ENCODE measurements at regions of chr19 and their contacts with region 1.

Region 1: DNA sequence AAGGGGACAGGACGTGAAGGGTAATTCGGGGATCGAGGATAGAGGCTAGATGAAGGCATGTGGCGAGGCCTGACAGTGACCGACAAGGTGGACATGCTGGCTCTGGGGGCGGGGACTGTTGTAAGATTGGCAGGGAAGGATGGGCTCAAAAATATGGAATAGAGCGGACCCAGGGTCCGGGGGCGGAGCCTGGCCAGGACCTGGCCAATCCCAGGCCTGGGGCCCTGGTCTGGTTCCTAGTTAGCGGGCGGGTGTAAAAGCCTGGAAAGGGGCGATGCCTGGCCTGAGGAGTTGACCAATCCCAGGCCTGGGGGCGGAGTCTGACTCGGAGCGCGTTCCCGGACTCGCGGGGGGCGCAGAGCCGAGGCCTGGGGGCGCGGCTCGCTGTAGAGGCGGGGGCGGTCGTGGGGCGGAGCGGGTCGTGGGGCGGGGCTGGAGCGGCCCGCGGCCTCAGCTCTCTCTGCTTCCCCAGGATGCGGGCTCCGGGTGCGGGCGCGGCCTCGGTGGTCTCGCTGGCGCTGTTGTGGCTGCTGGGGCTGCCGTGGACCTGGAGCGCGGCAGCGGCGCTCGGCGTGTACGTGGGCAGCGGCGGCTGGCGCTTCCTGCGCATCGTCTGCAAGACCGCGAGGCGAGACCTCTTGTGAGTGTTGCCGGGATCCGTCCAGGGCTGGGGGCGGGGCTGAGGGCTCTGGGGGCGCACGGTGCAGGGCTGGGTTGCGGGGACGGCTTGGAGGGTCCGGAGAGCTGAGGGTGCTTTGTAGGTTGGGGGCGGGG is at the start of gene SLC27A1:
- DNase-seq: peak; percentile 98 to 100
- H3K4me3 ChIP-seq: peak within 1 kb of the TSS; percentile 87 to 89
- H3K27ac ChIP-seq: peak within 1 kb of the TSS; percentile 80 to 91
- H3K4me1 ChIP-seq: peaks cover 13 to 18% of the 10 kb centered on the region in 2 donors
- H3K27me3 ChIP-seq: no peaks in the 10 kb centered on the region
- CTCF ChIP-seq: no peak
- total RNA-seq, gene SLC27A1: 64.9 TPM

Region 2: GRCh38 chr19:17266975-17267788 is 203.1 kb before region 1 on chr19 and contains the start of gene BABAM1:
- intact Hi-C with region 1: loop called (anchors 10 kb)
- DNase-seq: peak; percentile 92 to 99
- H3K4me3 ChIP-seq: peak within 1 kb of the TSS; percentile 79 to 96
- H3K27ac ChIP-seq: peak within 1 kb of the TSS; percentile 61 to 83
- H3K4me1 ChIP-seq: peaks cover 5 to 6% of the 10 kb centered on the region in 2 donors
- H3K27me3 ChIP-seq: no peaks in the 10 kb centered on the region
- CTCF ChIP-seq: no peak
- total RNA-seq, gene BABAM1: 85.5 TPM

Region 3: GRCh38 chr19:17336872-17337722 is 133.2 kb before region 1 on chr19 and contains the start of gene GTPBP3:
- intact Hi-C with region 1: loop called (anchors 2 kb)
- DNase-seq: peak; percentile 97 to 99
- H3K4me3 ChIP-seq: peak within 1 kb of the TSS; percentile 84 to 91
- H3K27ac ChIP-seq: peak within 1 kb of the TSS; percentile 91 to 95
- H3K4me1 ChIP-seq: peaks cover 15 to 23% of the 10 kb centered on the region in 2 donors
- H3K27me3 ChIP-seq: no peaks in the 10 kb centered on the region
- CTCF ChIP-seq: no peak
- total RNA-seq, gene GTPBP3: 256 TPM

Region 4: DNA sequence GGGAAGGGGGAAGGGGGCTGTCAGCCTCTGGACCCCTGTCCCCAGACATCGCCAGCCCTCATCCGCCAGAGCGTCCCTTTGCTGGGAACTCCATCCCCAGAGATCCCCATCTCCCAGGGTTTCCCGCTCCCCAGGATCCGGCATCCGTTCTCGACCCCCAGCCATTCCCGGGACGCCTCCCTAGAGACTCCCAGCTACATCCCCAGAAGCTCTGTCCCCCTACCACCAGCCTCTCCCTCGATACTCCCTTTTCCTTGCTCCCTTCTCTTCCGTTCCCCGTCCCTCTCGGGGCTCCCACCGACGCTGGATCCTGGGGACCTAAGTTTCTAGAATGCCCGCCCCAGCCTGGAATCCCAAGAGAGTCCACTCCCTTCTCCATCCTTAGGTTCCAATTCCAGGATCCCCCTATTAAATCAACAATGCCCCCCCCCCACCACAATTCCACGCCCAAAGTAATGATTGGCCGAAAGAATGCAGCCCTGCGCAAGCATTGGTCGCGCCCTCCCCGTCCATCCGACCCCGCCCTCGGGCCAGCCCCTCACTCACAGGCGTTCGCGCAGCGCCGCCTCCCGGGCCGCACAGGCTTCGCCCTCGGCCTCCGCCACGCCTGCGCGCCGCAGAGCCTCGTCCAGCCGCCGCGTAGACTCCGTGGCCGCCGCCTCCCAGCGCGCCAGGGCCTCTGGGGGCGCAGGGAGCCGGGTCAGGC is 79.4 kb before region 1 on chr19:
- intact Hi-C with region 1: loop called (anchors 2 kb)
- DNase-seq: peak; percentile 67 to 96
- H3K4me3 ChIP-seq: peak overlapping the region; percentile 45 to 71
- H3K27ac ChIP-seq: peak overlapping the region in 1 of 2 donors; percentile 32
- H3K4me1 ChIP-seq: peaks cover 4 to 6% of the 10 kb centered on the region in 2 donors
- H3K27me3 ChIP-seq: no peaks in the 10 kb centered on the region
- CTCF ChIP-seq: peak; percentile 68 to 96 (median 80)

Region 5: GRCh38 chr19:17488593-17489391 is 18.5 kb after region 1 on chr19:
- intact Hi-C with region 1: no loop called
- DNase-seq: no peak
- H3K4me3 ChIP-seq: no peak overlapping the region
- H3K27ac ChIP-seq: no peak overlapping the region
- H3K4me1 ChIP-seq: no peaks in the 10 kb centered on the region
- H3K27me3 ChIP-seq: no peaks in the 10 kb centered on the region
- CTCF ChIP-seq: no peak

Region 6: DNA sequence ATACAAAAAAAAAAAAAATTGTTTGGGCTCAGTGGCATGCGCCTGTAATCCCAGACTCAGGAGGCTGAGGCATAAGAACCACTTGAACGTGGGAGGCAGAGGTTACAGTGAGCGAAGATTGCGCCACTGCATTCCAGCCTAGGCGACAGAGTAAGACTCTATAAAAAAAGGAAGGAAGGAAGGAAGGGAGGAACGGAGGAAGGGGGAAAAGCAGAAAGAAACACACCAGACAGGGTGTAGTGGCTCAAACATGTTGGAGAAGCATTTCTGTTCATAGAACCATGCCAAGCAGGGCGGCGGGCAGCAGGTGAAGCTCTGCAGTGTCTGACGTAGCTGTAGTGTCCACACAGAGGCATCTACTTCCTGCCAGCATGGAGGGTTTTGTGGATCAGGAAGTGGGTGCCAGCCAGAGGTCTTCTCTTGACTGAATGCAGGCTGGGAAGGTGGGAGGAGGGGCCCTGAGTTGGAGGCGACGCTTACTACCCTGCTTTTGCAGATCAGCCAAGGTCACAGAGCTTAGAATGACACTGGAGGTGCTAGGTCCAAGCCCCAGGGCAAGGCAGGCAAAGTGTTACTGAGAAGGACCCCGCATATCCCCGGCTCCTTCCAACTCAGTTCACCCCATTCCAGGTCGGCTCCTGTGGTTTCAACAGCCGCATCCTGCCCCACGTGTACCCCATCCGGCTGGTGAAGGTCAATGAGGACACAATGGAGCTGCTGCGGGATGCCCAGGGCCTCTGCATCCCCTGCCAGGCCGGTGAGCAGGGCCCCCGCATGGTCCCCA is 29.6 kb after region 1 on chr19:
- intact Hi-C with region 1: no loop called
- DNase-seq: no peak
- H3K4me3 ChIP-seq: no peak overlapping the region
- H3K27ac ChIP-seq: peak overlapping the region in 1 of 2 donors; percentile 16
- H3K4me1 ChIP-seq: no peaks in the 10 kb centered on the region
- H3K27me3 ChIP-seq: no peaks in the 10 kb centered on the region
- CTCF ChIP-seq: no peak

Region 7: GRCh38 chr19:17511724-17512573 is 41.7 kb after region 1 on chr19:
- intact Hi-C with region 1: loop called (anchors 1 kb)
- DNase-seq: peak; percentile 43 to 91
- H3K4me3 ChIP-seq: peak overlapping the region; percentile 85 to 97
- H3K27ac ChIP-seq: peak overlapping the region; percentile 92 to 97
- H3K4me1 ChIP-seq: peaks cover 5 to 14% of the 10 kb centered on the region in 2 donors
- H3K27me3 ChIP-seq: no peaks in the 10 kb centered on the region
- CTCF ChIP-seq: peak in 2 of 3 experiments; percentile 15 to 20

Measured in ascending aorta (tissue), 2 donors.